ENCODE measurements at regions of chr3 and their contacts with region 1.

Region 1: GRCh38 chr3:132722164-132723024 is at the start of gene NPHP3:
- DNase-seq: peak; percentile 87
- H3K4me3 Mint-ChIP-seq: peak within 1 kb of the TSS; percentile 91
- H3K27ac Mint-ChIP-seq: peak within 1 kb of the TSS; percentile 87
- H3K4me1 Mint-ChIP-seq: peaks cover 30% of the 10 kb centered on the region
- H3K27me3 Mint-ChIP-seq: no peaks in the 10 kb centered on the region
- total RNA-seq, gene NPHP3: 16.1 and 20.5 TPM in 2 replicates

Region 2: GRCh38 chr3:132416807-132417694 is 305.3 kb before region 1 on chr3 and contains the start of gene DNAJC13:
- intact Hi-C with region 1: loop called (anchors 1 kb)
- DNase-seq: peak; percentile 91
- H3K4me3 Mint-ChIP-seq: peak within 1 kb of the TSS; percentile 99
- H3K27ac Mint-ChIP-seq: peak within 1 kb of the TSS; percentile 95
- H3K4me1 Mint-ChIP-seq: peaks cover 39% of the 10 kb centered on the region
- H3K27me3 Mint-ChIP-seq: peaks cover 1% of the 10 kb centered on the region
- total RNA-seq, gene DNAJC13: 32.8 and 36.1 TPM in 2 replicates

Region 3: DNA sequence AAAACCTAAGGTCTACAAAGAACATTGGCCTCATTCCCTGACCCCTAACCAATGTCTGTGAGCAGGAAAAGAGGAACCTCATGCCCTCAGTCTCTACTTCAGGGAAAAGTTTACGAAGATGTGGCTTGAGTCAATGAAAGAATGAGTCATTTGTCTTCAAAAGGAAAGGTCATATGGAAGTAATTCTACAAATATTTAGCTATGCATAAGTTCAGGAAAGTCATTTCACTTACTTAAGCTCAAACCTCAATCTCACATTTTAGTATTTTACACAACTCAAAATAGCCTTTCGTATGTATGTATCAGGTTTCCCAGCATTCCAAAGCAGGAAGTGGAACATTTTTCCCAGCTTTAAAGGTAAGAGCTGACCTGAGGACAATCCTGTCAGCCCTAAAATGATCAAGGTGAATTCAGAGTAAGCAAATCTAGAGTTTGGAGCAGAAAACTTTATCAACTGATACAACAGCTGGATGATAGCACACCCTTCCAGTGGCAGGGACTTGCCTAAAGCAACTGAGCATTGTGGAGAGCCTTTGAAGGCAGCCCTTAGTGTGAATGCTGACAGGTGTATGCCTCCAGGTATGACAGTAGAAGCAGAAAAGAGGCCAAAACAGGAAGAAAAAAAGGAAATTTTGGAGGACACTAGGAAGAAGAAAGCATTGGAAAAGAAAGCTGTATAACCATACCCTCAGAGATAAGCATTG is 179.2 kb before region 1 on chr3:
- intact Hi-C with region 1: no loop called
- DNase-seq: no peak
- H3K4me3 Mint-ChIP-seq: peak overlapping the region; percentile 62
- H3K27ac Mint-ChIP-seq: peak overlapping the region; percentile 99
- H3K4me1 Mint-ChIP-seq: peaks cover 49% of the 10 kb centered on the region
- H3K27me3 Mint-ChIP-seq: no peaks in the 10 kb centered on the region

Region 4: DNA sequence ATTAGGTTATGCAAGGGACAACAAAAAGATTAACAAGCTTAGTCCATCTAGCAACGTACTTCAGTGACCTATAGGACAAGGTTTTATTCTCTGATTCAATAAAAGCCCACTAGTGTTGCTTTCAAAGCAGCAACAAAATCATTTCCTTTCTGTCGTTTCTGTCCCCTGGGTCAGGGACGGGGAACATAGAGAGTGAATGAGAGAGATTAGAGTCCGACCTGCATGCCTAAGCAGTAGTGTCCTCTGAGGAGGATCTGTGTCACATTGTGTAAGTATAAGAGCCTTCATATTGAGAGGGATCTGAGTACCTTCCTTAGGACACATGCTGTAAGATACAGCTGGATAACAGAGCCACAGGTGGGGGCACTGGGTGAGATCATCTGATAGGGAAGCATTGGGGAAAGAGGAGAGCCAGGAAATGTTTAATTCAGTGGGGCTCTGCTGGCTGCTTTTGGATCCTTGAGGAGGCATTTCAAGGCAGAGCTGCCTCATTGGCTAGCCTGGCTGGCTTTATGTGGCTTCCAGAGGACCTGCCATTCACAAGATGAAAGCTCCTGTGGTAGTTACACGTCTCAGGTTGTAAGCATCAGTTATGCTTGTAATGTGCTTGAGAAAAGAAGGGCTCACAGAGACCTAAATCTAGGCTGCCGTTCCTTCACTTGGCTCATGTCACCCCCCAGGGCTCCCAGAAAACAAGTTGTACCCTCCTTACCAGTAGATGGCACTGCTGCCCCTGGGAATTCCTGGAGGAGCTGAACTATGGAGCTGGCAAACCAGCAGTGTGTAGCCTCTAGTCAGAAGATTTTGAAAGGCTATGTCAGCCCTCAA is 318.5 kb after region 1 on chr3:
- intact Hi-C with region 1: loop called (anchors 10 kb)
- DNase-seq: no peak
- H3K4me3 Mint-ChIP-seq: no peak overlapping the region
- H3K27ac Mint-ChIP-seq: no peak overlapping the region
- H3K4me1 Mint-ChIP-seq: peaks cover 2% of the 10 kb centered on the region
- H3K27me3 Mint-ChIP-seq: peaks cover 37% of the 10 kb centered on the region

Region 5: DNA sequence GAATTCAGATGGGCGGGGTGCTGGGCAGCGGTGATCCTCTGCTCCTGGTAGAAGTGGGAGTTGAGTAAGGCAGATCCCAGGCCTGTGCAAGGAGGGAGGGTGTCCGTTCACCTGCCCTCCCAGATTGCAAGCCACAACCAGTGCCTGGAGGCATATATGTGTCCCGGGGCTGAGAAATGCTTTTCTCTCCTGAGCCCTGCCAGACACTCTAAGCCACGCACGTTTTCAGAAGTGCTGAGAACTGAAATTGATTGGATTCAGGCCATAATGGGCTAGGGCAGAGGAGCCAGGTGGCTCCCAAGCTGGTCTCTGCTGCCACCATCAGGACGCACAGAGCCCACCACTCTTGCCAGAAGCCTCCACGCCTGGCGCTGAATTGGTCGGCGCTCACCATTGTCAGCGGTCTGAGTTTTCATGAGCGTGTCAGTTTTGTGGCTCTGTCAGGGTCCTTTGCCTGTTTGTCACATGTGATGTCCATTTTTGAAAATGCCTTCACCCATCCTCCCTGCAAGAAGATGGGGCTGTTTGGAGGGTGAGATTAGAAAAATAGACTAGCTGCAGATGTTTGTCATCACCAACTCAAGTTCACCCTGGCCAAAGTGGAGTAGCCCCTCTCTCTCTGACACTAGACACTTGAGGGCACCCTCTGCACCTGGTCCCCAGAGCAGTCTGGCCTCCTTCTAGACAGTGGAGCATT is 662.1 kb after region 1 on chr3:
- intact Hi-C with region 1: loop called (anchors 1 kb)
- DNase-seq: no peak
- H3K4me3 Mint-ChIP-seq: no peak overlapping the region
- H3K27ac Mint-ChIP-seq: no peak overlapping the region
- H3K4me1 Mint-ChIP-seq: no peaks in the 10 kb centered on the region
- H3K27me3 Mint-ChIP-seq: peaks cover 6% of the 10 kb centered on the region

Region 6: DNA sequence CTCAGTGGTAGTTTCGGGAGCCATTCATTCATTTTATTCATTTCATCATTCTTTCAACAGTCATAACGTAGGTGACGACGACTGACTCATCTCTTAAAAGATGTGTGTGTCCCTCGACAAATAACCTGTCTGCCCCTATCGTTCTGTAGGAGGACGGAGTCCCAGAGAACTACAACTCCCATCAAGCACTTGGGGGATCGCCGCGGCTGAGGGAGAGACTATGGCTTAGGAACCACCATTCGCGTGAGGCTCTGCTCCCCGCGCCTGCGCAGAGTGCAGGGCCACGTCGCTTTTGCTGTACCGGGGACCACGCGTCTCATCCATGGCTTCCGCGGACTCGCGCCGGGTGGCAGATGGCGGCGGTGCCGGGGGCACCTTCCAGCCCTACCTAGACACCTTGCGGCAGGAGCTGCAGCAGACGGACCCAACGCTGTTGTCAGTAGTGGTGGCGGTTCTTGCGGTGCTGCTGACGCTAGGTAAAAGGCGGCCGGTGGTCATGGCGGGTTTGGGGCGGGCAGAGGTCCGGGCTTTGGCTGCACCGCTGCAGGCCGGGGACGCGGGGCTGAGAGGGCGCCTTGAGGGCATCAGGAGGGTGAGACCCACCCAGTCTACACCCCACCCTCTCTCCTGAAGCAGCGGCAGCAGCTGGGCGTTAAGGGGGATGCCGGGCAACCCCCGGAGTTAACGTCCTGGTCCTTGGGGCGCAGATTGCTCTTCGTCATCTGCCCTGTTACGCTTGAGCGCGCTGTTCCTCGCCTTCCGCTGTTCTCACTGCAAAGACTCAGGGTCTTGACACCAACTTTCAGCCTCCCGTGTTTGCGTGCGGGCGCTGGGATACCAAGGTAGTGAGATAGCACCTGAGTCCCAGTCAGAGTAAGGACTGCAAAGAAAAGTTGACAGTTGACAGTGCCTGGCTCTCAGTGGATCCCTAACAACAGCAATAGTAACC is 1083.4 kb after region 1 on chr3 and contains the start of gene SRPRB:
- intact Hi-C with region 1: loop called (anchors 5 kb)
- DNase-seq: peak; percentile 94
- H3K4me3 Mint-ChIP-seq: peak within 1 kb of the TSS; percentile 94
- H3K27ac Mint-ChIP-seq: peak within 1 kb of the TSS; percentile 90
- H3K4me1 Mint-ChIP-seq: peaks cover 17% of the 10 kb centered on the region
- H3K27me3 Mint-ChIP-seq: peaks cover 9% of the 10 kb centered on the region
- total RNA-seq, gene SRPRB: 91.5 and 92.1 TPM in 2 replicates

Region 7: GRCh38 chr3:134485718-134486576 is 1763.6 kb after region 1 on chr3 and contains the starts of genes ANAPC13 and CEP63:
- intact Hi-C with region 1: loop called (anchors 2 kb)
- DNase-seq: peak; percentile 92
- H3K4me3 Mint-ChIP-seq: peak within 1 kb of the TSS; percentile 97
- H3K27ac Mint-ChIP-seq: peak within 1 kb of the TSS; percentile 99
- H3K4me1 Mint-ChIP-seq: peaks cover 37% of the 10 kb centered on the region
- H3K27me3 Mint-ChIP-seq: no peaks in the 10 kb centered on the region
- total RNA-seq, gene ANAPC13: 27.3 and 27.4 TPM in 2 replicates
- total RNA-seq, gene CEP63: 18.0 and 20.1 TPM in 2 replicates